ENCODE measurements at regions of chrX and their contacts with region 1.

Region 1: GRCh38 chrX:123256378-123256777 is 72.3 kb downstream of the GRIA3 start:
- DNase-seq: no peak
- ATAC-seq: no peak
- H3K4me3 ChIP-seq: no peak overlapping the region
- H3K27ac ChIP-seq: no peak overlapping the region
- H3K4me1 ChIP-seq: no peaks in the 10 kb centered on the region
- H3K27me3 ChIP-seq: no peaks in the 10 kb centered on the region
- CTCF ChIP-seq: no peak

Region 2: GRCh38 chrX:122790376-122791089 is 465.8 kb before region 1 on chrX:
- intact Hi-C with region 1: loop called in 1 of 10 experiments (anchors 5 kb)
- DNase-seq: no peak
- ATAC-seq: no peak
- H3K4me3 ChIP-seq: no peak overlapping the region
- H3K27ac ChIP-seq: no peak overlapping the region
- H3K4me1 ChIP-seq: no peaks in the 10 kb centered on the region
- H3K27me3 ChIP-seq: no peaks in the 10 kb centered on the region
- CTCF ChIP-seq: no peak

Region 3: GRCh38 chrX:123236859-123237258 is 19.5 kb before region 1 on chrX:
- intact Hi-C with region 1: loop called in 1 of 10 experiments (anchors 1 kb)
- DNase-seq: no peak
- ATAC-seq: peak in 3 of 8 donors; percentile 38 to 66 (median 56)
- H3K4me3 ChIP-seq: no peak overlapping the region
- H3K27ac ChIP-seq: peak overlapping the region in 4 of 10 donors; percentile 10 to 48 (median 19)
- H3K4me1 ChIP-seq: peaks cover 0 to 3% (median 0%) of the 10 kb centered on the region in 9 donors
- H3K27me3 ChIP-seq: no peaks in the 10 kb centered on the region
- CTCF ChIP-seq: no peak

Measured in heart right ventricle (tissue), 16 donors.